Endothelial cell of umbilical vein (primary cell): ENCODE measurements at regions of chr15 and their contacts with region 1.

Region 1: DNA sequence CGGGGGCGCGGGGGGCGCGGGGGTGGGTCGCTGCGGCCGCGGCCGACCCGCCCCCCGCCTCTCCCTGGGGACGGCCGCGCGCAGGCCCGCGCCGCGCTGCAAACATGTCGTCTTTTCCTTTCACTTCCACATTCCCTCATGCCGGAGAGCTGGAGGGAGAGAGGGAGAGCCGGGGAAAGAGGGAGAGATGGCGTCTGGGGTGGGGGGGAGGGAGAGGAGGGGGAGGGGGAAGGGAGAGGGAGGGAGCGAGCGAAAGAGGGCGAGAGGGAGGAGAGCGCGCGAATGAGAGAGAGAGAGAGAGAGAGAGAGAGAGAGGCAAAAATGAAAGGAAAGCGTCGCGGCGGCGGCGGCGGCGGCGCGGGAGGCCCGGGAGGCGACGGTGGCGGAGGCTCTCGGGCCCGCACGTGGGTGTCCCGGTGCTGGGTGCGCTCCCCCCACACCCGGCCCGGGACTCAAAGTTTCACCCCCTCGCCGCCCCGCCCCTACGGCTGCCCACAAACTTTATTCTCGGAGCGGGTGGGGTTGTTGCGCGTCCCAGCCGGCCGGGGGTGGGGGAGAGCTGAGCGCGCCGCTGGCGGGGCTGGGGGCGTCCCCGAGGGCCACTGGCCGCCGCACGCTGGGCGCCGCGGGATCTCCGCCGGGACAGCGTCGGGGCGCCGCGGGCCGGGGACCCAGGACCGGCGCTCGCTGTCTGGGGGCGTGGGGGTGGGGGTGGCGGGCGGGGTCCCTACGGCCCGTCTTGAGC is 731 bp downstream of the ZNF710 start:
- DNase-seq: no peak
- H3K4me3 ChIP-seq: peak overlapping the region; percentile 62 to 80 (median 63)
- H3K27ac ChIP-seq: no peak overlapping the region
- H3K4me1 ChIP-seq: peaks cover 52% of the 10 kb centered on the region
- H3K27me3 ChIP-seq: no peaks in the 10 kb centered on the region
- CTCF ChIP-seq: no peak
- POLR2A ChIP-seq: no peak

Region 2: DNA sequence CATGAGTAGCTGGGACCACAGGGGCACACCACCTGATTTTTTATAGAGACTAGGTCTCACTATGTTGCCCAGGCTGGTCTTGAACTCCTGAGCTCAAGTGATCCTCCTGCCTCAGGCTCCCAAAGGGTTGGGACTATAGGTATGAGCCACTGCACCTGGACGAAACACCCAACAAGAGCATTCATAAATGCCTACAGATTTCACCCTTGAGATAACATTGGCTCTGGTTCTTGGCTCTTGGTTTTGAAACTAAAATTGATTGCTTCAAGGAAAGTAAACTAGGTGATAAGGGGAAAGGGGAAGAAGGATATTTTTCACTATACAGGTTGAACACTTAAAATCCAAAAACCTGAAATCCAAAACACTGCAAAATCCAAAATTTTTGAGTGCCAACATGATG is 118.3 kb before region 1 on chr15:
- CTCF ChIA-PET with region 1: no interaction called
- POLR2A ChIA-PET with region 1: no interaction called
- dilution Hi-C with region 1: no loop called
- intact Hi-C with region 1: no loop called
- DNase-seq: no peak
- H3K4me3 ChIP-seq: no peak overlapping the region
- H3K27ac ChIP-seq: no peak overlapping the region
- H3K4me1 ChIP-seq: peaks cover 4% of the 10 kb centered on the region
- H3K27me3 ChIP-seq: no peaks in the 10 kb centered on the region
- CTCF ChIP-seq: no peak
- POLR2A ChIP-seq: no peak

Region 3: GRCh38 chr15:89893696-89894455 is 108.0 kb before region 1 on chr15 and contains the start of gene AP3S2:
- CTCF ChIA-PET with region 1: interaction called, 3 read pairs
- POLR2A ChIA-PET with region 1: no interaction called
- dilution Hi-C with region 1: no loop called
- intact Hi-C with region 1: loop called (anchors 2 kb)
- DNase-seq: peak; percentile 92
- H3K4me3 ChIP-seq: peak within 1 kb of the TSS; percentile 77 to 96 (median 86)
- H3K27ac ChIP-seq: peak within 1 kb of the TSS; percentile 69
- H3K4me1 ChIP-seq: peaks cover 5% of the 10 kb centered on the region
- H3K27me3 ChIP-seq: no peaks in the 10 kb centered on the region
- CTCF ChIP-seq: no peak
- POLR2A ChIP-seq: peak; percentile 85
- total RNA-seq, gene AP3S2: 20.4 and 31.1 TPM in 2 replicates

Region 4: DNA sequence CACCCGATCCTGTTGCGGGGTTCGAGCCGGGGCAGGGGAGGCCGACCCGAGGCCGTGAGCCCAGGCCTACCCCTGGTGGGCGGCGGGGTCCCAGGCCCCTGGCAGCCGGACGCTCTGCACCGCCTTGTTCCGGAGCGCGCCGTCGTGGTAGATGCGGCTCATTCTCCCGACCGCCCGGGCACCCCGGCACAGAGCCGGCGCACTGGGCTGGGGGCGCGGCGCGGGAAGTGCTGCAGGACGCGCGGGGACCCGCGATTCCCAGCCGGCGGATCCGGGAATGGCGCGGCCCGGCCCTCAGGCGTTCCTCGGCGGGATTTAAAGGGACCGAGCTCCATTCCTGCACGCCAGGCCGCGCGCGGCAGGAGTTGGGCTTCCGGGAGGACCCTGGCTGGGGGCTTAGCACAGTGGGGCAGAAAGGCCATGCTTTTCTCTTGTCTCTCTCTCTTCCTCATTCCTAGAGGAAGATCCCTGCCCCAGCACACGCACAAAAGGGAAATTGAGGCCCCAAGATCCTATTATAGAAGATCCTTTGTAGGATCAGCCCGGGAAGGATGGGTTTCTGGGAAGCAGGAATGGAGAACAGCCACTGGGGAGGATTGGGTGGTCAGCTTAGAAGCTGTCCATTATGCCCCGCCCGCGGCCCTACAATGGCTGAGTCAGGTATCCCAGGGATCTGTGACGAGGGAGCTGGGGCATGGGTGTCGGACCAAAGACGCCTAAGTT is 89.0 kb before region 1 on chr15 and contains the start of gene ARPIN:
- CTCF ChIA-PET with region 1: interaction called, 4 read pairs
- POLR2A ChIA-PET with region 1: no interaction called
- dilution Hi-C with region 1: no loop called
- intact Hi-C with region 1: loop called (anchors 5 kb)
- DNase-seq: peak; percentile 38
- H3K4me3 ChIP-seq: peak within 1 kb of the TSS; percentile 61 to 84 (median 68)
- H3K27ac ChIP-seq: peak within 1 kb of the TSS; percentile 5
- H3K4me1 ChIP-seq: peaks cover 11% of the 10 kb centered on the region
- H3K27me3 ChIP-seq: no peaks in the 10 kb centered on the region
- CTCF ChIP-seq: no peak
- POLR2A ChIP-seq: peak; percentile 41
- total RNA-seq, gene ARPIN: 18.7 and 23.3 TPM in 2 replicates

Region 5: DNA sequence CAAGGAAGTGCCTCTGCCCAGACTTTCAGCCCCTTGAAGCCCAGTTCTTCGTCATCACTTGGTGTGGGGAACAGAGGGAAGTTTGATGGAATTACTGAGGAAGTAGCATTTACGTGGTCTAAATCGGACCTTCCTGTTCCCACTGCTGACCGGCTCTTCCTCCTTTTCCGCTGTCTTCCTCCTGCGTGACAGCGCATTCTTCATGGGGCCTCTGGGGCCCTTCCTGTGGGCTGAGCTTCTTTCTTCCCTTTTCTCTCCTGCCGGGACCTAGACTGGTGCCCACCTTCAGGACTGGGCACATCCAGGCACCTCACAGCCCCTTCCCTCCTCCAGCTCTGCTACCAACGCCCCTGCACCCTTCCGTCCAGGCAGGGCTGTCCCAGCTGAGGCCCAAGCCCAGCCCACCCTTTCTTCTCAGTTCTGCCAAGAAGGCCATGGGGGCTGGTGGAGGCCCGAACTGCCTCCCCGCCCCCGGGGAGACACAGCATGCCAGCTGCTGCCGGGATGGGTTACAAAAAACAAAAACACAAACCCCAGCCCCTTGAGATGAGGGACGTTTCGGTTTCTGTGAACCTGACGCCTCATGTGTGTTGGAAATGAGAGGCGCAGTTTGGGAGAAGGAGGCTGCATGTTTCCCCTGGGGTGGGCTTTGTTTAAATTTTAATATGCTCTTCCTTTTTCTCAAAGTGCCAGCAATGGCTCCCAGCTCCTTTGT is 18.3 kb after region 1 on chr15:
- CTCF ChIA-PET with region 1: interaction called, 6 read pairs
- POLR2A ChIA-PET with region 1: interaction called, 3 read pairs
- dilution Hi-C with region 1: no loop called
- intact Hi-C with region 1: loop called (anchors 2 kb)
- DNase-seq: peak; percentile 55
- H3K4me3 ChIP-seq: no peak overlapping the region
- H3K27ac ChIP-seq: peak overlapping the region; percentile 75
- H3K4me1 ChIP-seq: peaks cover 23% of the 10 kb centered on the region
- H3K27me3 ChIP-seq: no peaks in the 10 kb centered on the region
- CTCF ChIP-seq: no peak
- POLR2A ChIP-seq: peak; percentile 39

Region 6: DNA sequence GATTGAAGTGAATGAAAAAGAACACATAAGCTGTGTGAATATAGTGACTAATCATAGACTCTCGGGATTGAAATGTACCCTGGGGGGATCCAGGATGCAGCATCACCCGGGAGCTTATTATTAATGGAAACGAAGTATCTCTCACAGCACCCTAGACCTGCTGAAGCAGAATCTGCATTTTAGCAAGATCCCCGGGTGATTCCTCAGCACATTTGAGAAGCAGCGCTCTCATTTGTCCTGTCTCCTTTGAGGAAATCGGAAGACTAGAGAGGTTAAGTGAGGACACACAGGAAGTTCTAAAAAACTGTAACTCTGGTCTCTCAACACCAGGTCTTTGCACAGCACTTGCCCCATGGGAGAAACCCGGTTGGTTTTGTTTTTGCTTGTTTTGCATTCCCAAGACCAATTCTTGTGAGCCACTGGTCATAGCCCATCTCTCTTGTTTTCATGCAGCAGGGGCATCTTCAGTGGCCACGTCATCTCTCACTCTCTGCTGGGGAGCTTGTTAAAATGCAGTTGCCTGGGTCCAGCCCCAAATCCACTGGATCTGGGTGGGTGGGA is 29.5 kb after region 1 on chr15:
- CTCF ChIA-PET with region 1: interaction called, 6 read pairs
- POLR2A ChIA-PET with region 1: interaction called, 3 read pairs
- dilution Hi-C with region 1: no loop called
- intact Hi-C with region 1: loop called (anchors 1 kb)
- DNase-seq: no peak
- H3K4me3 ChIP-seq: no peak overlapping the region
- H3K27ac ChIP-seq: no peak overlapping the region
- H3K4me1 ChIP-seq: peaks cover 31% of the 10 kb centered on the region
- H3K27me3 ChIP-seq: no peaks in the 10 kb centered on the region
- CTCF ChIP-seq: no peak
- POLR2A ChIP-seq: no peak